K562 (cell line): ENCODE measurements at regions of chr17 and their contacts with region 1.

Region 1: DNA sequence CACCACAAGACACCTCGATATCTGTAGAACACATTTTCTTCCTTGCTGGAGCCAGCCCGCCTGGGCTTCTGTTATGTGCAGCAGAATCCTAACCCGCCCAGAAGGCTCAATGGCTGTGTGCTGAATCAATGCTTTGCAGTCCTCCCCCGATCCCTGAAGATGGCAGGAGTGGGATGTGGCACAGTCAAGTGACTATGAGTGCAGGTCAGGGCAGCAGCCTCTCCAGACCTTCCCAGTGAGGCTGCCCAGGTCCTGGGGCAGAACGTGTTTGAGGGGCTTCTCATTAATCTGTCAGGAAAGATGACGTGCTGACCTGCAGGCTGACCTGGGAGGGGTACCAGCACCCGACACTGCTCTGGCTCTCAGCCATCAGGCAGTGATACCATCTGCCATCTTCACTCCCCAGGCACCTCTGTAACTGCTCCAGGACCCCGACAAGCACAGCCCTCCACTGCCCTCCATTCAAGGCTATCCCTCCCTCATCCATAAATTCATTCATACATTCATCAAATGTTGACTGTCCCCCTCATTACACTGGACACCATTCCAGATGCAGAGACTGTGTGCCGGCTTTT is 35.2 kb downstream of the LRRC75A start:
- DNase-seq: no peak
- ATAC-seq: no peak
- H3K4me3 ChIP-seq: no peak overlapping the region
- H3K27ac ChIP-seq: no peak overlapping the region
- H3K4me1 ChIP-seq: peaks cover 0 to 3% of the 10 kb centered on the region in 2 experiments; a peak in 2 of 5 replicates
- H3K27me3 ChIP-seq: no peaks in the 10 kb centered on the region
- CTCF ChIP-seq: no peak
- EP300 ChIP-seq: no peak
- POLR2A ChIP-seq: no peak
- RAD21 ChIP-seq: no peak

Region 2: GRCh38 chr17:16363749-16364536 is 92.9 kb before region 1 on chr17:
- CTCF ChIA-PET with region 1: no interaction called
- POLR2A ChIA-PET with region 1: no interaction called
- in situ Hi-C with region 1: no loop called
- intact Hi-C with region 1: loop called (anchors 10 kb)
- DNase-seq: peak; percentile 63 to 78 (median 67)
- ATAC-seq: peak; percentile 98
- H3K4me3 ChIP-seq: no peak overlapping the region
- H3K27ac ChIP-seq: no peak overlapping the region
- H3K4me1 ChIP-seq: no peaks in the 10 kb centered on the region; a peak in 1 of 5 replicates
- H3K27me3 ChIP-seq: no peaks in the 10 kb centered on the region
- CTCF ChIP-seq: peak; percentile 77 to 88 (median 82)
- EP300 ChIP-seq: no peak
- POLR2A ChIP-seq: no peak
- RAD21 ChIP-seq: peak; percentile 62 to 80

Region 3: DNA sequence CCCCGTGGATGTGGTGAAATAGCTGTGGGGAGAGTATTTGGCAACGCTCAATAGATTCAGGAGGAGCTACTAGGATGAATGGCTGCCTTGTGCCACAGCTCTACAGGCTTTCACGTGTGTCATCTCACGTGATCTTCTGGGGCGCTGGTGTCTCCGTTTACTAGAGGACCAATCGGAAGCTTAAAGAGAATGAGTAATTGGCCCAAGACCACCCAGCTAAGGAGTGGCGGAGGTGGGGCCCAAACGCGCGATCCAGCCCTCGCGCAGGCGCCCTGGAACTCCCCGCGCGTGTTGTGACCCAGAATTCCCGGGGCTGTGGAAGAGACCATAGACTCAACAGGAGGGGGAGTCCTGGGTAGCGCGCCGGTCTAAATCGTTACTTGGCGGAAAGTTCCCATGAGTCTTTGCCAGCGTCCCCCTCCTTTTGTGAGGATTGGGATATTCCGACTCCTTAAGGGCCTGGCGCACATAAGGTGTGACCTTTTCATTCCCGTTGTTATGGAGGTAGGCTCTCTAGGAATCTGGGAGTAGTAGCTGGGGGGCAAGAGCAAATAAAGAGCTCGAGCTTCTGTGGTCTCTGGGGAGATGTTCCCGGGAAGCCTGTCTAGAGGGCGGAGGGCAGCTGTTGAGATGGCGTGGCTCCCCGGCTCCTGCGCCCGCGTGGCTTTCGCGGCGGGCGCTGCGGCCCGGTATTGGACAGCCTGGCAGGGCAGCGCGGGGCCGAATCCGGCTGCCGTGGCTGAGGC is 18.1 kb before region 1 on chr17:
- CTCF ChIA-PET with region 1: no interaction called
- POLR2A ChIA-PET with region 1: interaction called, 31 read pairs
- in situ Hi-C with region 1: no loop called
- intact Hi-C with region 1: no loop called
- DNase-seq: peak; percentile 92 to 98 (median 94)
- ATAC-seq: peak; percentile 88
- H3K4me3 ChIP-seq: peak overlapping the region; percentile 99
- H3K27ac ChIP-seq: peak overlapping the region; percentile 98
- H3K4me1 ChIP-seq: peaks cover 26 to 31% of the 10 kb centered on the region in 2 experiments
- H3K27me3 ChIP-seq: no peaks in the 10 kb centered on the region
- CTCF ChIP-seq: no peak
- EP300 ChIP-seq: peak; percentile 46
- POLR2A ChIP-seq: peak; percentile 99
- RAD21 ChIP-seq: no peak

Region 4: DNA sequence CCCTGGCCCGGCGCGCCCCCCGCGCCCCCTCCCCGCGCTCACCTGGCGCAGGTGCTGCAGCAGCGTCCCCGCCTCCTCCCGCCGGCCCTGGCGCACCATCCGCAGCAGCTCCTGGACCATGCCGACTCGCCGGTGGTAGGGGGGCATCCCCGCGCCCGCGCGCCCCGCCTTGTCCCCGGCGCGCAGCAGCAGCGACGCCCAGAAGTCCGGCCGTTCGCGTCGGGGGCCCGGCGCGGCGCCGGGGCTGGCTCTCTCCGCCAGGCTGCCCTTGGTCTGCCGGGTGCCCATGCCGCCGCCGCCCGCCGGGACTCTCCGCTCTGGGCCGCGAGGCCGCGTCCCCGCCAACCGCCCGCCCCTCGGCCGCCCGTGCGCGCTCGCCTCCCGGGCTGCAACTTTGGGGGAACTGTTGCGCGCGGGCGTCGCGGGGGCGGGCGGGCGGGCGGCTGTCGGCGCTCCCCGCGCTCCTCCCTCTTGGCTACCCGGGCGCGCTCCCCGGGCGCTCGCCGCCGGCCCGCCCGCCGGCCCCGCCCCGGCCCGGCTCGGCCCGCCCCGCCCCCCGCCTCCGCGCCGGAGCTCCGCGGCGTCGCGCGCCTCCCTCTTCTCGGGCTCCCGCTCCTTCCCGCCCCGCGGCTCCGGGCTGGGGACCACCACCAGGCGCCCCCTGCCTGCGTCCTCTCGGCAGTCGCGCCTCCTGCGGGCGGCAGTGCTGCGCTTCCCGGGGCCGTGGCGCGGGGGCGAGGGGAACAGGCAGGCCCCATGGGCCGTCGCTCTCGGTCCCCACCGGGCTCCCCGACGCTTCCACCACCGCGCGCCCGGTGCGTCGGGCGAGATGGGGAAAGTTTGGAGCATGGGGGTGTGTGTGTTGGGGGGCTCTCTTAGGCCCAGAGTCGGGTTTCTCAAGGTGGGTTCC is 35.1 kb after region 1 on chr17 and contains the start of gene LRRC75A:
- CTCF ChIA-PET with region 1: no interaction called
- POLR2A ChIA-PET with region 1: no interaction called
- in situ Hi-C with region 1: no loop called
- intact Hi-C with region 1: no loop called
- DNase-seq: peak; percentile 50 to 91 (median 84)
- ATAC-seq: peak; percentile 91
- H3K4me3 ChIP-seq: peak within 1 kb of the TSS; percentile 28
- H3K27ac ChIP-seq: no peak within 1 kb of the TSS
- H3K4me1 ChIP-seq: peaks cover 20 to 27% of the 10 kb centered on the region in 2 experiments; a peak in 4 of 5 replicates
- H3K27me3 ChIP-seq: peaks cover 7 to 34% of the 10 kb centered on the region in 2 experiments; a peak in 4 of 5 replicates
- CTCF ChIP-seq: peak in 1 of 3 experiments; percentile 62; a peak in 2 of 6 replicates
- EP300 ChIP-seq: no peak
- POLR2A ChIP-seq: no peak
- RAD21 ChIP-seq: no peak
- polyA plus RNA-seq, gene LRRC75A: 0.08 to 0.34 TPM

Region 5: DNA sequence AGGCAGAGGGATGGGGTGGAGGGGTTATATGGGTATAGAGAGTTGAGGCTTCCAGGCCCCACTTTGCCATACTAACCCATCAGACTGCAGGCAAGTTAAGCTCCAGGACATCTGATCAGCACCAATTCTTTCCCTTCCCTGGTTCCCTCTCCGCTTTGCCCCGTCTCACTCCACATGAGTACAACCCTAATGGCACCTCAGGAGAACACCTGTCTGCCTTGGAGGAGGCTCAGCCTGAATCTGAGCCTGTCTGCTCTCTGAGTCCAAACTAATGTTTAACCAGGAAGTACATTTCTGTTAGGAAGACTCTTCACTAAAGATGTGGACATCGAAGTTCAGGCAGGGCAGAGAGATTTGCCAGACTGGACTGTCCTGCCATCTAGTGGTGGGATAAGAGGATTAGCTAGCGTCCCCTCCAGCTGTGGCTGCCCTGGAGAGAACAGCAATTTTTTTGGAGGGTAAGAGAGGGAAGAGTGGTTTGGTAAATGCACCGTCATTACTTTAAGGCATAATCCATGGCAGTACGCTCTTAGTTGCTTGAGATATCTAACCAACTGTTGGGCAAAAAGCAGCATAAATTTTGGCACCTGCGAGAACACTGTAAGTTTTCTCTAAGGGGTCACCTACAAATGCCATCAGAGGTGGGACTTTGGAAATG is 64.4 kb after region 1 on chr17:
- CTCF ChIA-PET with region 1: interaction called, 7 read pairs
- POLR2A ChIA-PET with region 1: no interaction called
- in situ Hi-C with region 1: loop called (anchors 5 kb)
- intact Hi-C with region 1: loop called (anchors 2 kb)
- DNase-seq: peak; percentile 72 to 82 (median 76)
- ATAC-seq: peak; percentile 98
- H3K4me3 ChIP-seq: no peak overlapping the region
- H3K27ac ChIP-seq: no peak overlapping the region
- H3K4me1 ChIP-seq: peaks cover 0 to 6% of the 10 kb centered on the region in 2 experiments; a peak in 3 of 5 replicates
- H3K27me3 ChIP-seq: no peaks in the 10 kb centered on the region
- CTCF ChIP-seq: peak; percentile 83 to 87 (median 84)
- EP300 ChIP-seq: no peak
- POLR2A ChIP-seq: no peak
- RAD21 ChIP-seq: peak; percentile 86 to 91

Region 6: GRCh38 chr17:16529906-16530305 is 73.1 kb after region 1 on chr17:
- CTCF ChIA-PET with region 1: no interaction called
- POLR2A ChIA-PET with region 1: no interaction called
- in situ Hi-C with region 1: loop called (anchors 5 kb)
- intact Hi-C with region 1: no loop called
- DNase-seq: no peak
- ATAC-seq: no peak
- H3K4me3 ChIP-seq: no peak overlapping the region
- H3K27ac ChIP-seq: no peak overlapping the region
- H3K4me1 ChIP-seq: no peaks in the 10 kb centered on the region
- H3K27me3 ChIP-seq: peaks cover 18 to 22% of the 10 kb centered on the region in 2 experiments; a peak in 4 of 5 replicates
- CTCF ChIP-seq: no peak
- EP300 ChIP-seq: no peak
- POLR2A ChIP-seq: no peak
- RAD21 ChIP-seq: no peak